CD4-positive, alpha-beta memory T cell (primary cell): ENCODE measurements at regions of chr12 and their contacts with region 1.

Region 1: DNA sequence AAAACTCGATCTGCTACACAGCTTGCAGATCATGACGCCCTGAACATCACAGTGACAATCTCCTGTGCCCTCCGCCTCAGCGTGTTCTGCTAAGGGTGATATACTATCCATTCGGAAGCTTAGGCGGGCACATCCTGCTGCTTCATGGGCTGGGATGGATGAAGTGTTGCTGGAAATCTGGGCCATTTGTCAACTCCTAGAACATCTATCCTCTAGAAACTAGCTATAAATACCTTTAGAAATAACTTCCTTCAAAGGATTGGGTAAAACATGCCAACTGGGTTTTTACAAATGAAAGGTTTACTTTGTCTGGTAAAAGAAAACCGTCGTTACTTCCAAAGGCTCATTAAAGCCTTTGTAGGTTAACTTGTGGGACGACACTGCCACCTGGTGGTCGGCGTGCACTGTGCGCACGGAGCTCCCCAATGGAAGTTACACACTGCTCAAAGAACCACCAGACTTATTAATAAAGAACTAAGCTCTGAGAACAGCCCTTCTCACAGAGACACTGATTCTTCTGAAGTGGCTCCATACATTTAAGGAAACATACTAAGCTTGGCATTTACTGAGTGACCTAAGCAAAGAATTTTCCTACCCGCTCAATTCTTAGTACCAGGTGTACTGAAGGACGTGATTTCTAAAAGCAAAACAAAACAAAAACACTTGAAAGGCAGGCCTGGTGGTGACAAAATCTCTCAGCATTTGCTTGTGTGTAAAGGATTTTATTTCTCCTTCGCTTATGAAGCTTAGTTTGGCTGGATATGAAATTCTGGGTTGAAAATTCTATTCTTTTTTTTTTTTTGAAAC is 21.6 kb upstream of the CACNA2D4 start:
- DNase-seq: peak; percentile 81 to 87 (median 83)
- H3K4me3 ChIP-seq: no peak overlapping the region
- H3K4me3 Mint-ChIP-seq: no peak overlapping the region
- H3K27ac ChIP-seq: no peak overlapping the region
- H3K27ac Mint-ChIP-seq: peak overlapping the region in 4 of 7 donors; percentile 37 to 68 (median 52)
- H3K4me1 ChIP-seq: peaks cover 5% of the 10 kb centered on the region
- H3K4me1 Mint-ChIP-seq: peaks cover 4 to 6% (median 5%) of the 10 kb centered on the region in 4 donors
- H3K27me3 ChIP-seq: no peaks in the 10 kb centered on the region
- H3K27me3 Mint-ChIP-seq: no peaks in the 10 kb centered on the region

Region 2: GRCh38 chr12:1634590-1635191 is 305.3 kb before region 1 on chr12:
- CTCF ChIA-PET with region 1: interaction called, 26 read pairs
- POLR2A ChIA-PET with region 1: interaction called, 5 read pairs
- intact Hi-C with region 1: loop called (anchors 1 kb)
- DNase-seq: peak in 4 of 5 donors; percentile 36 to 46 (median 40)
- H3K4me3 ChIP-seq: no peak overlapping the region
- H3K4me3 Mint-ChIP-seq: no peak overlapping the region
- H3K27ac ChIP-seq: no peak overlapping the region
- H3K27ac Mint-ChIP-seq: no peak overlapping the region
- H3K4me1 ChIP-seq: peaks cover 12% of the 10 kb centered on the region
- H3K4me1 Mint-ChIP-seq: peaks cover 5 to 15% (median 12%) of the 10 kb centered on the region in 4 donors
- H3K27me3 ChIP-seq: peaks cover 17% of the 10 kb centered on the region
- H3K27me3 Mint-ChIP-seq: peaks cover 27 to 39% of the 10 kb centered on the region in 2 donors

Region 3: DNA sequence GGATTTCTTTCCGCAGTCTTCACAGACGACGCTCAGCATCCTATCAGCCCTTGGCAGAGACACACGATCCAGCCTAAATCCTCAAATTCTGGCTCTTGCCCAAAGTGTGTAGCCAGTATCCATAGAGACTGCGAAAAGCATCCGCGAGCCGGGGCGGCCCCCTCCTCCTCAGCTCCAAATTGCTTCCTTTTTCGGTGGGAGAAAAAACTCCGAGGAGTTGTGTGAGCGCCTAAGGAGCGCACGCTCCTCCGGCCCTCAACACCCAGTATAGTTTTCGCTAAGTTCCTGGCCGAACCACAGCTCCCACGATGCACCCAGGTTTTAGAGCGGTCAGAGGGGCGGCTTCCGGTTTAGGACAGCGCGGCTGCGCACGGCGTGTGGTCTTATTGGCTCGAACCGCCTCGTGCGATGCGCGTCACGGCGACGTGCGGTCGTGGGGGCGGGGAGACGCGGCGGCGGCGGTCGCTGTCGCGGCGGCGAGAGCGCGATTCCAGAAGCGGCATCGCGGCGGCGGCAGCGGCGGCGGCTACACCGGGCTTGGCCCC is 249.4 kb before region 1 on chr12 and contains the start of gene ADIPOR2:
- CTCF ChIA-PET with region 1: interaction called, 30 read pairs
- POLR2A ChIA-PET with region 1: no interaction called
- intact Hi-C with region 1: no loop called
- DNase-seq: peak; percentile 93 to 95 (median 94)
- H3K4me3 ChIP-seq: peak within 1 kb of the TSS; percentile 70 to 87
- H3K4me3 Mint-ChIP-seq: peak within 1 kb of the TSS; percentile 88 to 97 (median 93)
- H3K27ac ChIP-seq: peak within 1 kb of the TSS; percentile 73
- H3K27ac Mint-ChIP-seq: peak within 1 kb of the TSS; percentile 96 to 99 (median 99)
- H3K4me1 ChIP-seq: peaks cover 27% of the 10 kb centered on the region
- H3K4me1 Mint-ChIP-seq: peaks cover 26 to 53% (median 35%) of the 10 kb centered on the region in 4 donors
- H3K27me3 ChIP-seq: no peaks in the 10 kb centered on the region
- H3K27me3 Mint-ChIP-seq: peaks cover 0 to 1% of the 10 kb centered on the region in 2 donors
- total RNA-seq, gene ADIPOR2: 35.7 to 36.2 TPM

Region 4: GRCh38 chr12:1812650-1813302 is 127.2 kb before region 1 on chr12:
- CTCF ChIA-PET with region 1: interaction called, 19 read pairs
- POLR2A ChIA-PET with region 1: no interaction called
- intact Hi-C with region 1: no loop called
- DNase-seq: no peak
- H3K4me3 ChIP-seq: no peak overlapping the region
- H3K4me3 Mint-ChIP-seq: peak overlapping the region in 6 of 8 donors; percentile 14 to 60 (median 50)
- H3K27ac ChIP-seq: peak overlapping the region; percentile 6
- H3K27ac Mint-ChIP-seq: peak overlapping the region; percentile 9 to 85 (median 75)
- H3K4me1 ChIP-seq: peaks cover 29% of the 10 kb centered on the region
- H3K4me1 Mint-ChIP-seq: peaks cover 3 to 35% (median 13%) of the 10 kb centered on the region in 4 donors
- H3K27me3 ChIP-seq: no peaks in the 10 kb centered on the region
- H3K27me3 Mint-ChIP-seq: peaks cover 3 to 5% of the 10 kb centered on the region in 2 donors

Region 5: DNA sequence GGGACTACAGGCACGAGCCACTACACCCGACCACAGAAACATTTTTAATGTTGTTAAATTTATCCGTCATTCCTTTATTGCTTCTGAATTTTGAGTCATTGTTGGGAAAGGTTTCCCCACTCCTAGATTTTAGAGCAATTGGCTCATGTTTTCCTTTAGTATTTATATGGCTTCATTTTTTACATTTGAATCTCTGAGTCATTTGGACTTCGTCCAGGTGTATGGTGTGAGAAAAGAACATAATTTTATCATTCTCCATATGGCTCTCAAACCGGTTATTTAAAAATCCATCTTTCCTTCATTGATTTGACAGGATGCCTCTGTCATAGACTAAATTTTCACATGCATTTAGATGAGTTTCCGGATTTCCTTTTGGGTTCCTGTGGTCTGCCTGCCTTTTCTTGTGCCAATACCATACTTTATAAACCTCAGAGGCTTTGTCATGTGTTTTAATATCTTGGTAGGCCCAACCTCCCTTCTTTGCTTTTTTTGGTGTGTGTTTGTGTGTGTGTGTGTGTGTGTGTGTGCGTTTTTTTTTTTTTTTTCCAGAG is 88.8 kb before region 1 on chr12:
- CTCF ChIA-PET with region 1: no interaction called
- POLR2A ChIA-PET with region 1: no interaction called
- intact Hi-C with region 1: no loop called
- DNase-seq: no peak
- H3K4me3 ChIP-seq: no peak overlapping the region
- H3K4me3 Mint-ChIP-seq: no peak overlapping the region
- H3K27ac ChIP-seq: no peak overlapping the region
- H3K27ac Mint-ChIP-seq: no peak overlapping the region
- H3K4me1 ChIP-seq: peaks cover 4% of the 10 kb centered on the region
- H3K4me1 Mint-ChIP-seq: peaks cover 0 to 7% (median 5%) of the 10 kb centered on the region in 4 donors
- H3K27me3 ChIP-seq: no peaks in the 10 kb centered on the region
- H3K27me3 Mint-ChIP-seq: peaks cover 1 to 6% of the 10 kb centered on the region in 2 donors

Region 6: GRCh38 chr12:1966561-1967226 is 26.7 kb after region 1 on chr12:
- CTCF ChIA-PET with region 1: interaction called, 14 read pairs
- POLR2A ChIA-PET with region 1: no interaction called
- intact Hi-C with region 1: no loop called
- DNase-seq: no peak
- H3K4me3 ChIP-seq: no peak overlapping the region
- H3K4me3 Mint-ChIP-seq: no peak overlapping the region
- H3K27ac ChIP-seq: no peak overlapping the region
- H3K27ac Mint-ChIP-seq: peak overlapping the region in 2 of 7 donors; percentile 12 to 79
- H3K4me1 ChIP-seq: no peaks in the 10 kb centered on the region
- H3K4me1 Mint-ChIP-seq: peaks cover 0 to 10% (median 3%) of the 10 kb centered on the region in 4 donors
- H3K27me3 ChIP-seq: no peaks in the 10 kb centered on the region
- H3K27me3 Mint-ChIP-seq: no peaks in the 10 kb centered on the region

Region 7: GRCh38 chr12:2034633-2035430 is 94.8 kb after region 1 on chr12:
- CTCF ChIA-PET with region 1: interaction called, 15 read pairs
- POLR2A ChIA-PET with region 1: interaction called, 5 read pairs
- intact Hi-C with region 1: no loop called
- DNase-seq: peak; percentile 74 to 84 (median 81)
- H3K4me3 ChIP-seq: peak overlapping the region in 1 of 2 donors; percentile 53
- H3K4me3 Mint-ChIP-seq: peak overlapping the region; percentile 69 to 78 (median 74)
- H3K27ac ChIP-seq: no peak overlapping the region
- H3K27ac Mint-ChIP-seq: peak overlapping the region in 5 of 7 donors; percentile 4 to 80 (median 36)
- H3K4me1 ChIP-seq: peaks cover 11% of the 10 kb centered on the region
- H3K4me1 Mint-ChIP-seq: peaks cover 6 to 11% (median 9%) of the 10 kb centered on the region in 4 donors
- H3K27me3 ChIP-seq: no peaks in the 10 kb centered on the region
- H3K27me3 Mint-ChIP-seq: peaks cover 24 to 27% of the 10 kb centered on the region in 2 donors

Region 8: DNA sequence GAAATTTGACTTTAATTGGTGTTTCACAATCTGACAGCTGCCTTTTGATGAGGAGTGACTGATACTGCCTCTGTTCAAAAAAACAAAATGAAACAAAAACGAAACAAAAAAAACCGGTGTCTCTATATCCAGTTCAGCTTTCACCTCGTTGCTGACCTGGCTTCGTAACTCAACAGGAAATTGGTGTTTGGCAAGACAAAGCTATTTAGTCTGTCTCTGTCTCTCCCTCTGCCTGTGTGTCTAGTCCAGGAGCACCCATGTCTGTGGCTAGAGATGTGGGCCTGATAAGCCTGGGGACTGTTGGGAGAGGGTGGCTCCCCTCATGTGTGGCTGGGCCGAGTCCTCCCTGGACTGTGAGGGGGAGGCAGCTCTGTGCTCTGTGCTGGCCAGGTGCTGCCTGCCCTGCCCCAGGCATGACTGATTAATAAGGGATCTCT is 124.1 kb after region 1 on chr12:
- CTCF ChIA-PET with region 1: no interaction called
- POLR2A ChIA-PET with region 1: no interaction called
- intact Hi-C with region 1: no loop called
- DNase-seq: peak in 4 of 5 donors; percentile 17 to 36 (median 26)
- H3K4me3 ChIP-seq: peak overlapping the region; percentile 9 to 39
- H3K4me3 Mint-ChIP-seq: peak overlapping the region; percentile 59 to 88 (median 81)
- H3K27ac ChIP-seq: no peak overlapping the region
- H3K27ac Mint-ChIP-seq: peak overlapping the region; percentile 54 to 94 (median 89)
- H3K4me1 ChIP-seq: peaks cover 13% of the 10 kb centered on the region
- H3K4me1 Mint-ChIP-seq: peaks cover 11 to 20% (median 13%) of the 10 kb centered on the region in 4 donors
- H3K27me3 ChIP-seq: peaks cover 4% of the 10 kb centered on the region
- H3K27me3 Mint-ChIP-seq: peaks cover 7 to 20% of the 10 kb centered on the region in 2 donors

Region 9: GRCh38 chr12:2076196-2076570 is 136.2 kb after region 1 on chr12:
- CTCF ChIA-PET with region 1: no interaction called
- POLR2A ChIA-PET with region 1: no interaction called
- intact Hi-C with region 1: no loop called
- DNase-seq: no peak
- H3K4me3 ChIP-seq: no peak overlapping the region
- H3K4me3 Mint-ChIP-seq: no peak overlapping the region
- H3K27ac ChIP-seq: no peak overlapping the region
- H3K27ac Mint-ChIP-seq: no peak overlapping the region
- H3K4me1 ChIP-seq: no peaks in the 10 kb centered on the region
- H3K4me1 Mint-ChIP-seq: no peaks in the 10 kb centered on the region
- H3K27me3 ChIP-seq: no peaks in the 10 kb centered on the region
- H3K27me3 Mint-ChIP-seq: peaks cover 7 to 19% of the 10 kb centered on the region in 2 donors